H1 (cell line): ENCODE measurements at regions of chr4 and their contacts with region 1.

Region 1: DNA sequence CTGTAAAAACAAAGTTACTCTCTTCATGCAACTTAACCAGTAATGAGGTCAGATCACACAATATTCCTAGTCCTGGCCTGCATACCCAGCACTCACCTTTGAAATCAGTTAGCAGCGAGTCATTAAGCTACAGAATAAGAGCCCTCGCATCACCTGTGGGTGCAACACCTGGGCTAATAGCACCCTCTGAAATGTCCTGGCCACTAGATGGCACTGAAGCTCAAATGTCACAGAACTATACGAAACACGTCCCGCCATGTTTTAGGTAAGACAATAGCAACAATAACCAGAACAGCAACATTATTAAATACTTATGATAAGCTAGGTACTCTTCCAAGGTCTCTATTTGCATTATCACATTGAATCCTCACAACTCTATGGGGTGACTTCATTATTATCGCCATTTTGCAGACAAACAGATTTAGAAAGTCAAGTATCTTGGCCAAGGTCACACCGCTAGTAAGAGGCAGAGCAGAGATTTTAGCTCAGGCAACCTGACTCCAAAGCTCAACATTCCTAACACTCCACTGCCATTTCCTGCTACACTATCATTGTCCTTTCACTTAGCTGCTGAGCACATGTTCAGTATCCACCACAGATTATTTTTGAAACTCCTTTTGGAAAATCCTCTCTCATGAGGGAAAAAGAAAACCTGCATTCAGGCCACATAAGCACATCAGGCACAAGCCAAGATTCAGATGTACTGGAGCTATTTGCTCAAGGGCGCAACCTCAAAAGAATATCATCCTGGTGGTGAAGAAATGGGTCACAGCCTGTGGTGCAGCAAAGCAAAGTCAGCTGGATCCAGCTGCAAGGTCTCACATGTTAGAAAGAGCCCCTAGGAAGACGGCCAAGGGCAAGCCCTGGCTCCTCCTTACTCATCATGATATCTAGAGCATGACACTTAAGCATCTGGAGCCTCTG is 59.5 kb upstream of the KDR start:
- DNase-seq: peak in 1 of 2 experiments; percentile 71
- H3K4me3 ChIP-seq: no peak overlapping the region
- H3K27ac ChIP-seq: no peak overlapping the region
- H3K4me1 ChIP-seq: peaks cover 6 to 22% (median 13%) of the 10 kb centered on the region in 4 experiments; a peak in 6 of 7 replicates
- H3K27me3 ChIP-seq: no peaks in the 10 kb centered on the region
- CTCF ChIP-seq: peak; percentile 66 to 77 (median 69)
- EP300 ChIP-seq: no peak
- POLR2A ChIP-seq: no peak
- RAD21 ChIP-seq: peak; percentile 73 to 81

Region 2: DNA sequence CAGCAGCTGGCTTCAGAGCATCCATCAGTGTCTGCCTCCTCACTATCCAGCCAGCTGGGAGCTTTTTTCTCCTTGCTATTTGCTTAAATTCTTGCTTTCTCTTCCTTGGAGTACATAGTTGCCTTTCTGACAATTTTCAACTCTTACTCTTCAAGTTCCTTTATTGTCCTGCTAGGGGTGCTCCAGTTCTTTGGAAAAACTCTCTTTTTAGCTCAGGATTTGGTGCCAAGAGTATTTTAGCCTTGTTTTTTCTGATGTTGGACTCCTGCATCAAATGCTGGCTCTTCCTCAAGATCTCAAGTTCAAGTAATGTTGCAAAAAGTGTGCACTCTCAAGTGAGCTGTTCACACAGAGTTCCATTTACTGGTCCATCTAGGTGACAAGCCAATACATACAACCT is 185.9 kb before region 1 on chr4:
- CTCF ChIA-PET with region 1: interaction called, 10 read pairs
- POLR2A ChIA-PET with region 1: no interaction called
- DNase-seq: no peak
- H3K4me3 ChIP-seq: no peak overlapping the region
- H3K27ac ChIP-seq: no peak overlapping the region
- H3K4me1 ChIP-seq: no peaks in the 10 kb centered on the region
- H3K27me3 ChIP-seq: no peaks in the 10 kb centered on the region; a peak in 1 of 7 replicates
- CTCF ChIP-seq: peak in 2 of 3 experiments; percentile 29 to 52; a peak in 2 of 4 replicates
- EP300 ChIP-seq: no peak
- POLR2A ChIP-seq: no peak
- RAD21 ChIP-seq: peak; percentile 70 to 80

Region 3: GRCh38 chr4:55157559-55158277 is 27.1 kb before region 1 on chr4:
- CTCF ChIA-PET with region 1: interaction called, 25 read pairs
- POLR2A ChIA-PET with region 1: no interaction called
- DNase-seq: peak in 1 of 2 experiments; percentile 55
- H3K4me3 ChIP-seq: no peak overlapping the region
- H3K27ac ChIP-seq: no peak overlapping the region
- H3K4me1 ChIP-seq: peaks cover 0 to 2% (median 0%) of the 10 kb centered on the region in 4 experiments; a peak in 1 of 7 replicates
- H3K27me3 ChIP-seq: peaks cover 0 to 1% (median 0%) of the 10 kb centered on the region in 4 experiments; a peak in 1 of 7 replicates
- CTCF ChIP-seq: no peak
- EP300 ChIP-seq: no peak
- POLR2A ChIP-seq: no peak
- RAD21 ChIP-seq: no peak

Region 4: DNA sequence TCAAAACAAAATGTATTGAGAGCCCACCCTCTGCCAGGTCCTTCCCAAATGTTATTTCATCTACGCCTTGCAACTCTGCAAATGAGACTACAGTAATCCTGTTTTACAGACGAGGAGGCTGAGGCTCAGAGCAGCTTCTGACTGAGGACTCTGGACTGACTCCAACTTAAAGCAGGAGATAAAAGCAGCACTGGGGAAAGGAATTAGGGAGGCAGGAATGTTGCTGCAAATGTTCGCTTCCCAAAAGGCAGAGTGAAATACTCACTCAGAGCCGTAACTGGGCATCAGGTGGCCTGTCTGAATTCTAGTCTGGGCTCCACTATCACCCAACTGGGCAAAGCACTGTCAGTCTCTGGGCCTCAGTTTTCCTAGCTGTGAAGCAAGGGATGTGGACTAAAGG is 66.5 kb after region 1 on chr4:
- CTCF ChIA-PET with region 1: interaction called, 11 read pairs
- POLR2A ChIA-PET with region 1: no interaction called
- DNase-seq: no peak
- H3K4me3 ChIP-seq: no peak overlapping the region
- H3K27ac ChIP-seq: no peak overlapping the region
- H3K4me1 ChIP-seq: peaks cover 2 to 4% (median 3%) of the 10 kb centered on the region in 4 experiments; a peak in 4 of 7 replicates
- H3K27me3 ChIP-seq: no peaks in the 10 kb centered on the region; a peak in 1 of 7 replicates
- CTCF ChIP-seq: no peak
- EP300 ChIP-seq: no peak
- POLR2A ChIP-seq: no peak
- RAD21 ChIP-seq: no peak

Region 5: GRCh38 chr4:55321707-55322264 is 136.9 kb after region 1 on chr4:
- CTCF ChIA-PET with region 1: interaction called, 54 read pairs
- POLR2A ChIA-PET with region 1: interaction called, 3 read pairs
- DNase-seq: peak in 1 of 2 experiments; percentile 87
- H3K4me3 ChIP-seq: no peak overlapping the region
- H3K27ac ChIP-seq: no peak overlapping the region
- H3K4me1 ChIP-seq: peaks cover 0 to 6% (median 1%) of the 10 kb centered on the region in 4 experiments; a peak in 2 of 7 replicates
- H3K27me3 ChIP-seq: no peaks in the 10 kb centered on the region
- CTCF ChIP-seq: peak in 2 of 3 experiments; percentile 60 to 69; a peak in 2 of 4 replicates
- EP300 ChIP-seq: no peak
- POLR2A ChIP-seq: no peak
- RAD21 ChIP-seq: peak; percentile 90 to 92

Region 6: DNA sequence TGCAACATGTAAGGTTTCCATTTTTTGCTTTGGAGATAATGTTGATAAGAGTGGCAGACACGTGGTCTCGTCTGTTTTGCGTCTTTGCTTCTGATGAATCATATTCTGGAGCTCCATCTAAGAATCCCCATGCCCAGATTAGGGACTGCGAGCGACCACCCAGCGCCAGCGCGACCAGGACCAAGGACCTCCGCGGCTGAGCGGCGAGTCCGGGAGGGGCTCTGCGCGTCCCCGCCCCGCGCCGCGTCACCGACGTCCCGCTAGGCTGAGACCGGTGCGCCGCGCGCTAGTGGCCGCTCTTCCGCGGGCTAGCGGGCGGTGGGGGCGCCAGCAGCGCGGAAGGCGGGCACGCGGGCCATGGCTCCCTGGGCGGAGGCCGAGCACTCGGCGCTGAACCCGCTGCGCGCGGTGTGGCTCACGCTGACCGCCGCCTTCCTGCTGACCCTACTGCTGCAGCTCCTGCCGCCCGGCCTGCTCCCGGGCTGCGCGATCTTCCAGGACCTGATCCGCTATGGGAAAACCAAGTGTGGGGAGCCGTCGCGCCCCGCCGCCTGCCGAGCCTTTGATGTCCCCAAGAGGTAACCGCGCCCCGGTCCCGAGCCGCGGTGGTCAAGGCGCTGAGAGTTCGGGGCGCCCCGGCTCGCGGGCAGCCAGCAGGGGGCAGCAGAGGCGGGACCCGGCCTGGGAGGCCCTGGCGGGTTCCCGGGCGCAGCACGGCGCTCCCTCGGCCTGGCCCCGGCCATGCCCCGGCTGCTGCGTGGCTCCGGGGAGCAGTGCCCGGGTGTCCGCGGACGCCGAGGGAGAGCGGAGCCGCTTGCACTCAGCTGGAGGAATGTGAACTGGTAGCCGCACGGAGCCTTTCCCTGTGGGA is 161.4 kb after region 1 on chr4 and contains the start of gene SRD5A3:
- CTCF ChIA-PET with region 1: interaction called, 10 read pairs
- POLR2A ChIA-PET with region 1: interaction called, 4 read pairs
- DNase-seq: peak; percentile 44 to 95
- H3K4me3 ChIP-seq: peak within 1 kb of the TSS; percentile 42 to 79 (median 64)
- H3K27ac ChIP-seq: peak within 1 kb of the TSS; percentile 46; the same call in 1 of the 2 replicates
- H3K4me1 ChIP-seq: peaks cover 0 to 9% (median 5%) of the 10 kb centered on the region in 4 experiments
- H3K27me3 ChIP-seq: no peaks in the 10 kb centered on the region
- CTCF ChIP-seq: peak; percentile 69 to 78 (median 71)
- EP300 ChIP-seq: no peak
- POLR2A ChIP-seq: peak in 1 of 2 experiments; percentile 56; a peak in 2 of 3 replicates
- RAD21 ChIP-seq: peak; percentile 36 to 74; a peak in 3 of 4 replicates
- total RNA-seq, gene SRD5A3: 19.4 and 19.6 TPM in 2 replicates